Panc1 (cell line): ENCODE measurements at regions of chr11 and their contacts with region 1.

Region 1: DNA sequence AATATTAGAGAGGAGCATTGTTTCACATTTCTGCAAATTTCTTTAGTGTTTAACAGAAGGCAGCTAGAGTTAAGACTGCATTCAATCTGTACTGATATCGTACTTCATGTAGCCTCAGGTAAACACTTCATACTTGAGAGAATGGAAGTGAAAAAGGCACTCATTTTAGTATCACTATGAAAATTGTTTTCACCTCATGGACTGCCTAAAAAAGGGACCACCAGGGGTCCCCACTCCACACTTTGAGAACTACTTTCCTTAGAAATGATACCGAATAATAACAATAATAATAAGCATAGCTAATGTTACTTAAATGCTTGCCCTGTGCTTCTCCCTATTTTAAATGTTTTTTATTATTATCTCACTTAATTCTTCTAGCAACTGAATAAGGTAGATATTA is 95.1 kb downstream of the BLID start:
- DNase-seq: no peak
- ATAC-seq: no peak
- H3K4me3 ChIP-seq: no peak overlapping the region
- H3K27ac ChIP-seq: no peak overlapping the region
- H3K4me1 ChIP-seq: no peaks in the 10 kb centered on the region
- H3K27me3 ChIP-seq: no peaks in the 10 kb centered on the region
- CTCF ChIP-seq: peak; percentile 62; the same call in 1 of the 2 replicates

Region 2: DNA sequence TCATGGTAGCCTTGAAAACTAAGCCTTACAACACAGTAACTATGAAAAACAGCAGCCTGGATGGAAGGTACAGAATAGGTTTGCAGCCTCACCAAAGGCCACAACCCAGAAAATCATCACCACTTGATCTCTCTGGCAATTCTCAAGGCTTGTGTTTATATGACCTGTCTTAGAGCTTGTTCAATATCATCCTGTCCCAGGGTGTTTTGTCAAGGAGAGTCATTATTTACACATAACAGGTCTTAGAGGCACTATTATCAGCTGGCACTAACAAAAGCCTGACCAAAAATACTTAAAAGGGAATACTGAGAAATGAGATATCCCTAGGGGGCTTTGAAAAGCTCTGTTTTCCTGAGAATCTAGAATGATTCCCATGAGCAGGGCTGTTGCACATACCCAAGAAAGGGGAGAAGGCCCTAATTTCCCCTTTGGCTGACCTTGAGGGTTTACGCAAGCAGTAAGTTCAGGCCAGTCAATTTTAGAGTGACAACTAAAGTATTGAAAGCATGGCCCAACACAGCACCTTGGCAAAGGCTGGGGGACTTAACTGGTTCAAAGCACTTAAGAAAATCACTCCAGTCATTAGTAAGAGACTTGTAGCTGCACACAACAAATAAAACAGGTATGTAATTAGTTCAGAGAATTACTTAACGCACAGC is 720.5 kb before region 1 on chr11:
- CTCF ChIA-PET with region 1: no interaction called
- POLR2A ChIA-PET with region 1: no interaction called
- in situ Hi-C with region 1: no loop called
- intact Hi-C with region 1: no loop called
- DNase-seq: no peak
- ATAC-seq: no peak
- H3K4me3 ChIP-seq: no peak overlapping the region
- H3K27ac ChIP-seq: no peak overlapping the region
- H3K4me1 ChIP-seq: 0 out of 2 replicates have a peak, but pooled peaks cover 3% of the 10 kb centered on the region
- H3K27me3 ChIP-seq: no peaks in the 10 kb centered on the region
- CTCF ChIP-seq: no peak

Region 3: GRCh38 chr11:121727942-121728341 is 293.0 kb before region 1 on chr11:
- CTCF ChIA-PET with region 1: no interaction called
- POLR2A ChIA-PET with region 1: no interaction called
- in situ Hi-C with region 1: no loop called
- intact Hi-C with region 1: no loop called
- DNase-seq: no peak
- ATAC-seq: no peak
- H3K4me3 ChIP-seq: no peak overlapping the region
- H3K27ac ChIP-seq: no peak overlapping the region
- H3K4me1 ChIP-seq: 0 out of 2 replicates have a peak, but pooled peaks cover 6% of the 10 kb centered on the region
- H3K27me3 ChIP-seq: no peaks in the 10 kb centered on the region
- CTCF ChIP-seq: no peak

Region 4: GRCh38 chr11:121749691-121750090 is 271.2 kb before region 1 on chr11:
- CTCF ChIA-PET with region 1: no interaction called
- POLR2A ChIA-PET with region 1: no interaction called
- in situ Hi-C with region 1: no loop called
- intact Hi-C with region 1: no loop called
- DNase-seq: no peak
- ATAC-seq: no peak
- H3K4me3 ChIP-seq: no peak overlapping the region
- H3K27ac ChIP-seq: no peak overlapping the region
- H3K4me1 ChIP-seq: no peaks in the 10 kb centered on the region
- H3K27me3 ChIP-seq: no peaks in the 10 kb centered on the region
- CTCF ChIP-seq: no peak

Region 5: GRCh38 chr11:122101625-122102291 is 80.9 kb after region 1 on chr11:
- CTCF ChIA-PET with region 1: no interaction called
- POLR2A ChIA-PET with region 1: no interaction called
- in situ Hi-C with region 1: no loop called
- intact Hi-C with region 1: loop called (anchors 5 kb)
- DNase-seq: no peak
- ATAC-seq: peak; percentile 57
- H3K4me3 ChIP-seq: peak overlapping the region; percentile 19 to 43; a peak in 3 of 4 replicates
- H3K27ac ChIP-seq: peak overlapping the region; percentile 80
- H3K4me1 ChIP-seq: peaks cover 3% of the 10 kb centered on the region
- H3K27me3 ChIP-seq: no peaks in the 10 kb centered on the region
- CTCF ChIP-seq: peak; percentile 76